A673 (cell line): ENCODE measurements at regions of chr9 and their contacts with region 1.

Region 1: DNA sequence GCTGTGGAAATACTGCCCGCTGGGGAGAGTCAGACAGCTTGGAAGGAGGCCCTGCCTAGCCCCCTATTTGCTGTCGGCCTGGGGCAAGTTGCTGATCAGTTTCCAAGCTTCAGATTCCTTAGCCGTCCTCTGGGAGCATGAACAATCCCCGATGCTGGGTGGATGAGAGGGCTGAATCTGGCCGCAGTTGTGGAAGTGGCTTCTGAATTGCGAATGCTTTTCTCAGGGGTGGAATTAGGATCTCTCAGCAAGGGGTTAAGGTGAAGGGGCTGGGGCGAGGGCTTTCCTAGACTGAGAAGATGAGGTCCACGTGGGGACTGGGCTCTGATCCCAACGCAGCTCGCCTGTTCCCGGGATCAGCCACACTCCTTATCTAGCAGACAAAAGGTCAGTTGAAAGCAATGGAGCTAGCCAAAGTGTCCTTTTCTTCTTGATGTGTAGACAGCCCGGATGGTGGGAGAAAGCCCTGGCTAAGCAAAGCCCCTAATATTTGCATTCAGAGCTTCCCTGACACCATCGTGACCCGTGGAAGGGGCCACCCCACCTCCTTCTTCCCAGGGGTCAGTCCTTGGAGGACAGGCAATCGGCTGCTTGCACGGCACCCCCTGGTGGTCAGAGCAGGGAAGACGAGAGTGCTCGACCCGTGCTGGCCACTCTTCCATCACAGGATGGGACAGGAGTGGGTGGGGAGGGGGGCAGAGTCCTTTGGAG is 54.9 kb downstream of the COL15A1 start:
- DNase-seq: peak; percentile 43
- H3K4me3 ChIP-seq: no peak overlapping the region
- H3K27ac ChIP-seq: no peak overlapping the region
- H3K4me1 ChIP-seq: no peaks in the 10 kb centered on the region
- H3K27me3 ChIP-seq: peaks cover 8% of the 10 kb centered on the region
- CTCF ChIP-seq: peak; percentile 88

Region 2: DNA sequence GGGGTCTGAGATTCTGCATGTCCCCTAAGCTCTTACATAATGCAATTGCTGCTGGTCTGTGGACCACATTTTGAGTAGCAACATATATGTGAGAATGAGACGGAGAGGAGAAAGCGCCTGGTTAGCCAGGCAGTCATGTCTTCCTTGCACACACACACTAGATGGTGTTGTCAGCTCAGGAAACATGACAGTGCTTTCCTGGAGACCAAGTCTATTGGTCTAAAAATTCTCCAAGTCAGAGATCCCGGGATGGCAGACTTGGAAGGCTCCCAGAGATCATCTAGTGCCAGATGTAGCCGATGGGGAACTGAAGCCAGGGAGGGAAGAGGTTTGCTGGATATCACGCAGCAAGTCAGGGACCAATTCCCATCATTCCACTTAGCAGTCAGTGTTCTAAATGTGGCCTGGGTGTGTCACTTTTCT is 137.7 kb before region 1 on chr9:
- CTCF ChIA-PET with region 1: no interaction called
- POLR2A ChIA-PET with region 1: no interaction called
- intact Hi-C with region 1: loop called (anchors 5 kb)
- DNase-seq: no peak
- H3K4me3 ChIP-seq: no peak overlapping the region
- H3K27ac ChIP-seq: no peak overlapping the region
- H3K4me1 ChIP-seq: no peaks in the 10 kb centered on the region
- H3K27me3 ChIP-seq: no peaks in the 10 kb centered on the region
- CTCF ChIP-seq: 0 out of 2 replicates have a peak, but pooled peaks have one; percentile 34

Region 3: DNA sequence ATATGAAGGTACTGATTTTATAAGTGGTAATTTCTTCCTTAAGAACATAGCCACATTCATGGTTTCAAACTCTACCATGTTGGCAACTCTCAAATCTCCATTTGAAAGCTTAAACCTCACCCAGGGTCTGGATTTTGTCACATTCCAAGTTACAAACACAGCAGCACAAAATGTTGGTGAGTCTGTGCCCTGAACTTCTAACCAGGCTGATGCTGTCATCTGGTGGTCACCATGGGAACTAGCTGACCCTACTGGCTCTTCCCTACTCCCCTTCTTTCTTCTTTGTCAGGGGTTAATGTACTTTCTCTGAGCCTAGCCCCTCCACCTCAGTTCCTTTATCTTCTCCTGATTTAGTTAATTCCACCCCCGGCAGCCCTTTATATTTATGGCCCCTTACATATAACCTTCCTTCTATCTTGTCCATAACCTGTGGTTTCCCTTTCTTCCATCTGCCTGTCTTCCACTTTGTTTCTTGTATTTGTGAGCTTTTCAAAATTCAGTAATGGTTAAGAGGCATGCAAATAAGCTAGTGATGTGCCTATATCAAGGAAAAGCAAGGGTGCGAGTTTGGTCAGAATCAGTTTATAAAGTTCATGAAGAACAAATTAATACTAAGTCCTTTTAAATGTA is 142.2 kb after region 1 on chr9:
- CTCF ChIA-PET with region 1: interaction called, 5 read pairs
- POLR2A ChIA-PET with region 1: interaction called, 3 read pairs
- intact Hi-C with region 1: loop called (anchors 2 kb)
- DNase-seq: peak; percentile 41
- H3K4me3 ChIP-seq: no peak overlapping the region
- H3K27ac ChIP-seq: no peak overlapping the region
- H3K4me1 ChIP-seq: no peaks in the 10 kb centered on the region
- H3K27me3 ChIP-seq: no peaks in the 10 kb centered on the region
- CTCF ChIP-seq: peak; percentile 67

Region 4: GRCh38 chr9:99274495-99274894 is 275.9 kb after region 1 on chr9:
- CTCF ChIA-PET with region 1: no interaction called
- POLR2A ChIA-PET with region 1: no interaction called
- intact Hi-C with region 1: no loop called
- DNase-seq: no peak
- H3K4me3 ChIP-seq: no peak overlapping the region
- H3K27ac ChIP-seq: no peak overlapping the region
- H3K4me1 ChIP-seq: no peaks in the 10 kb centered on the region
- H3K27me3 ChIP-seq: no peaks in the 10 kb centered on the region
- CTCF ChIP-seq: no peak

Region 5: DNA sequence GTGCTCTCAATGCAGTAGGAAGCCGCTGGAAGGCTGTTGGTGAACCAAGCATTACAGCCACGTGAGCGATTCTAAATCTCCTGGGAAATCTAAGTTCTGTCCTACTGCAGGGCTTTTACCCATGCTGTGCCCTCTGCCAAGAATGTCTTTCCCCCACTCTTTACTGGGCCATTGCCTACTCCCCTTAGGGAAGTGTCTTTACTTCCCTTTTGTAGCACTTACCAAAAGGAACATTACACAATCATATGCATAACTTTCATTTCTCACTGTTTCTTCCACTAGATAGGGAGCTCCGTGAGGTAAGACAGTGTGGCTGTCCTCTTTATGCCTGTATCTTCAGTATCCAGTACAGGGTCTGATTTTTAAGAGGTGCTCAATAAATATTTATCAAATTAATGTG is 581.4 kb after region 1 on chr9:
- CTCF ChIA-PET with region 1: no interaction called
- POLR2A ChIA-PET with region 1: no interaction called
- intact Hi-C with region 1: no loop called
- DNase-seq: no peak
- H3K4me3 ChIP-seq: no peak overlapping the region
- H3K27ac ChIP-seq: no peak overlapping the region
- H3K4me1 ChIP-seq: no peaks in the 10 kb centered on the region
- H3K27me3 ChIP-seq: no peaks in the 10 kb centered on the region
- CTCF ChIP-seq: no peak